Activated CD4-positive, alpha-beta memory T cell treated with anti-CD3 and anti-CD28 coated beads, Interleukin-2, amount 10 ng/mL, durations not matched to agents 7 days and 5 days (primary cell): ENCODE measurements at regions of chr16 and their contacts with region 1.

Region 1: DNA sequence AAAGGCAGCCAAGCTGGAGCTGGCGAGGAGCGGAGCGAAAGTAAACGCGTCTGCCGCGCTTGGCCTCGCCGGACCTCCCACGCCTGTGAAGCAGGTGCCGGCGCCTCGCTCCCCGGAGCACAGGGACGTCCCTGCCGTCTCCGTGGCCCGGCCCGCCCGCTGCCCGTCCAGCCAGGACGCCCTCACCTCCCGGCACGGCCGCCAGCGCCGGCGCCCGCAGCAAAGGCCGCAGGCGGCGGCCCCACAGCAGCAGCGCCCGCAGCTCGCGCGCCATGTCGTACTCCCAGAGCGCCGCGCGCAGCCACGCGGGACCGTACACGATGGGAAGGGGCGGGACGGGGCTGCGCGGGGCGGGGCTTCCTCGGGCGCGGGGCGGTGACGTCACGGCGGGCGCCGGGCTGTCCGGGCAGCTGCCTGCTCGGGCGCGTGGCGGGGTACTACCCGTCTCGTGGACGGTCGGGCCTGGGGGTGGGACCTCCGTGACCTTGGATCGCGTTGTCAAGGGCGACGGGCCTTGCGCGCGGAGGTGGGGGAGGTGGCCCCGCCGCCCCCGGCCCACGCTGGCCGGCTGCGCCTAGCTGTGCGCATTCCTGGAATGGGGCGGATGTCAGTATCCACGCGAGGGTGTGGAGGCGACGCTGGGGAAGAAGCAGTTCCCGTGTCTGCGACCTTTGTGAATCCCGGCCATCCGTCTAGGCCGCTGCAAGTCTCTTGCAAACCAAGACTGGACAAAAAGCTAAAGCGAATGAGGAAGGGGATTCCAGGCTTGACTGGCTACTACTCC is at the start of gene TRAP1:
- DNase-seq: peak; percentile 90
- H3K4me3 Mint-ChIP-seq: peak within 1 kb of the TSS; percentile 90
- H3K27ac Mint-ChIP-seq: peak within 1 kb of the TSS; percentile 83
- H3K4me1 Mint-ChIP-seq: peaks cover 37% of the 10 kb centered on the region
- H3K27me3 Mint-ChIP-seq: no peaks in the 10 kb centered on the region
- total RNA-seq, gene TRAP1: 81.0 to 87.6 TPM

Region 2: DNA sequence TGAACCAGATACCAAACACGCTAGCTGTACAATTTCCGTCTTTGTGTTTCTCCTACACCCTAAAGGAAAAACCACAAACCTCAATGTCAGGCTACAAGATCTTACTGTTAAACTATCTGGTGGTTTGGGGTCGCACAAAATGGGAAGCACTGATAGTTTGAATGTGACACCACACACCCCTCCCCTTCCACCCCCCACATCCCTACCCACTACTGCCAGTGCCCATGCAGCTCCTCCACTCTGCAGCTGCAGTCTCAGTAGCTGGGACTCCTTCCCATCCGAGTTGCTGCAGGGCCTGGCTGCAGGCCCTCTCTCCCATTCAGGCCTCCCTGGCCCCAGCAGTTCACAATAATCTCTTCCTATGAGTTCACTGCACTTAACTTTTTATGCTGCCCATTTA is 18.5 kb before region 1 on chr16:
- CTCF ChIA-PET with region 1: interaction called, 6 read pairs
- POLR2A ChIA-PET with region 1: interaction called, 13 read pairs
- DNase-seq: no peak
- H3K4me3 Mint-ChIP-seq: no peak overlapping the region
- H3K27ac Mint-ChIP-seq: no peak overlapping the region
- H3K4me1 Mint-ChIP-seq: peaks cover 7% of the 10 kb centered on the region
- H3K27me3 Mint-ChIP-seq: no peaks in the 10 kb centered on the region

Region 3: GRCh38 chr16:3731126-3731911 is 13.9 kb after region 1 on chr16:
- CTCF ChIA-PET with region 1: no interaction called
- POLR2A ChIA-PET with region 1: interaction called, 21 read pairs
- DNase-seq: no peak
- H3K4me3 Mint-ChIP-seq: no peak overlapping the region
- H3K27ac Mint-ChIP-seq: no peak overlapping the region
- H3K4me1 Mint-ChIP-seq: no peaks in the 10 kb centered on the region
- H3K27me3 Mint-ChIP-seq: no peaks in the 10 kb centered on the region

Region 4: DNA sequence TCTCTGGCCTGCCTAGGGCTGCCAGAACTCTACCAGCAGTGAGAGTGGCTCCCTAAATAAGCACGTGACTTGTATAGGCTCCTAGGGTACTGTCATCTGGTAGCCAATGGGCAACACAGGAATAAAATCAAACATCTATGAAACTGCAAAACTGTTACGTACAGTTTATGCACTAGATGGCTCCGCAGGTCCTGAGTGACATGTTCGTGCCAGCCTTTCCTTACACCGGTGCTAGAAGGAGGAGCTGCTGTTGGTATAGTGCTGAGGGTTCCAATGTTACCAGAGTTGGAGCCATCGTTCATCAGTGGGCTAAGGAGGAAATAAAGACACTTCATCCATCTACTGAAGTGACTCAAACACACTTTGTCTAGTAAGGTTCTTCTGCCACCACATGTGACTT is 63.1 kb after region 1 on chr16:
- CTCF ChIA-PET with region 1: no interaction called
- POLR2A ChIA-PET with region 1: no interaction called
- DNase-seq: no peak
- H3K4me3 Mint-ChIP-seq: no peak overlapping the region
- H3K27ac Mint-ChIP-seq: no peak overlapping the region
- H3K4me1 Mint-ChIP-seq: peaks cover 4% of the 10 kb centered on the region
- H3K27me3 Mint-ChIP-seq: no peaks in the 10 kb centered on the region

Region 5: DNA sequence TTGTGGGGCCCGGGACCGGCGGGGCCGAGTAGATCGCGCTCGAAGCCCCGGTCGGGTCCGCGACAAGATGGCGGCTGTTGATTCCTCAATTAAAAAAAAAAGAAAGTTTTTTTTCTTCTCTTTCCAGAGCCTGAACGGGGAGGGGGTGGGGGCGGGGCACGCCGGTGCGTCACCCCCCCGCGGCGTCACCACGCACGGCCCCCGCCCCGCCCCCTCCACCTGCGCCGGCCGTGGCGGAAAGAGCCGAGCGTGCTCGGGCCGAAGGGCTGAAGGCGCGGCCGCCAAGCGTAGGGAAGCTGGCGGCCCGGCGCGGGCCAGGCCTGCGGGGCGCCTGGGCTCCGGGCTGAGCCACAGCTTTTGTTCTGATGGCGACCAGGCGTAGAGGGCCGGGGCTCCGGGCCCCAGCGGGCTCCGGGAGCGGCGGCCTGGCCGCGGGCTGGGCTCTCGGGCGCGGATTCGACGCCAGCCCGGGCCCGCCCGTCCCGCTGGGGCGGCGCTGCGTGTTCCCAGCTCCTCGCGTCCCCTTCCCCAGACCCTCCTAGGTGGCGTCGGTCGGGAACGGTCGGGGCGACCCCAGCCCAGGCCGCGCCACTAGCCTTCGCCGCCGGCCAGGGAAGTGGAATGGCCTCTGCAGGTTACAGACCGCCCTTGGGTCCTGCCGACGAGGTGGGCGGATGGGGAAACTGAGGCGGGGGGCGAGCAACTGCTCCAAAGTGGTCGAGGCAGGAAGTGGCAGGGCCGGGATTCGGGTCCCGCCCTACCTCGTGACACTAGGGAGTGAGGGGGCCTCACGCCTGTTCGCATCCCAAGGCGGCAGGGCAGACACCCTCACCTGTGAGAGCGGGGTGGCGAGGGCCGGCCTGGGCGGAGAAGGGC is 163.4 kb after region 1 on chr16 and contains the start of gene CREBBP:
- CTCF ChIA-PET with region 1: no interaction called
- POLR2A ChIA-PET with region 1: interaction called, 11 read pairs
- DNase-seq: peak; percentile 91
- H3K4me3 Mint-ChIP-seq: peak within 1 kb of the TSS; percentile 93
- H3K27ac Mint-ChIP-seq: peak within 1 kb of the TSS; percentile 84
- H3K4me1 Mint-ChIP-seq: peaks cover 36% of the 10 kb centered on the region
- H3K27me3 Mint-ChIP-seq: peaks cover 9% of the 10 kb centered on the region
- total RNA-seq, gene CREBBP: 53.0 to 56.6 TPM